K562 (cell line): ENCODE measurements at regions of chr7 and their contacts with region 1.

Region 1: GRCh38 chr7:83410989-83411591 is 237.8 kb downstream of the SEMA3E start:
- DNase-seq: peak; percentile 11 to 36 (median 16)
- ATAC-seq: no peak
- H3K4me3 ChIP-seq: no peak overlapping the region
- H3K27ac ChIP-seq: no peak overlapping the region
- H3K4me1 ChIP-seq: no peaks in the 10 kb centered on the region
- H3K27me3 ChIP-seq: no peaks in the 10 kb centered on the region
- CTCF ChIP-seq: peak in 2 of 3 experiments; percentile 38 to 50; a peak in 4 of 6 replicates
- EP300 ChIP-seq: no peak
- POLR2A ChIP-seq: no peak
- RAD21 ChIP-seq: peak; percentile 29 to 55; a peak in 3 of 4 replicates

Region 2: DNA sequence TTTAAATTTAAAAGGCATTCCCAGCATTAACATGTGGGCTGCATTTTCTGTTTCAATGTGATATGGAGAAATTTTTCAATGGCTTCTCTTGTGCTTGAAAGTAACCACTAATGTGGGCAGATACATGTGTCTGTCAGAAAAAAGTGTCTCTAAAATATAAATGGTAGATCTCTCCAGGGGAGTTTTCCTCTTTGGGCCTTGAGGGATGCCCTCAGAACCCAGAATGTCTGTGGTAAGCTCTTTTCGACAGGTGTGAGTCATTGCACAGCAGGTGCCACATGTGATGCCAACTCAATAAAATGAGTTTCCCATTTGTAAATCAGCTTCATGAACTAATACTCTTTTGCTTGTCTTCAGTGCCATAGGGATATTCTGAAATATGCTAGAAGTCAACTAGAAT is 16.8 kb after region 1 on chr7:
- CTCF ChIA-PET with region 1: no interaction called
- POLR2A ChIA-PET with region 1: no interaction called
- in situ Hi-C with region 1: no loop called
- intact Hi-C with region 1: no loop called
- DNase-seq: no peak
- ATAC-seq: no peak
- H3K4me3 ChIP-seq: no peak overlapping the region
- H3K27ac ChIP-seq: no peak overlapping the region
- H3K4me1 ChIP-seq: no peaks in the 10 kb centered on the region
- H3K27me3 ChIP-seq: no peaks in the 10 kb centered on the region
- CTCF ChIP-seq: no peak
- EP300 ChIP-seq: no peak
- POLR2A ChIP-seq: no peak
- RAD21 ChIP-seq: no peak

Region 3: GRCh38 chr7:83439026-83439425 is 27.9 kb after region 1 on chr7:
- CTCF ChIA-PET with region 1: no interaction called
- POLR2A ChIA-PET with region 1: no interaction called
- in situ Hi-C with region 1: no loop called
- intact Hi-C with region 1: no loop called
- DNase-seq: no peak
- ATAC-seq: no peak
- H3K4me3 ChIP-seq: no peak overlapping the region
- H3K27ac ChIP-seq: no peak overlapping the region
- H3K4me1 ChIP-seq: no peaks in the 10 kb centered on the region
- H3K27me3 ChIP-seq: no peaks in the 10 kb centered on the region
- CTCF ChIP-seq: no peak
- EP300 ChIP-seq: no peak
- POLR2A ChIP-seq: no peak
- RAD21 ChIP-seq: no peak

Region 4: DNA sequence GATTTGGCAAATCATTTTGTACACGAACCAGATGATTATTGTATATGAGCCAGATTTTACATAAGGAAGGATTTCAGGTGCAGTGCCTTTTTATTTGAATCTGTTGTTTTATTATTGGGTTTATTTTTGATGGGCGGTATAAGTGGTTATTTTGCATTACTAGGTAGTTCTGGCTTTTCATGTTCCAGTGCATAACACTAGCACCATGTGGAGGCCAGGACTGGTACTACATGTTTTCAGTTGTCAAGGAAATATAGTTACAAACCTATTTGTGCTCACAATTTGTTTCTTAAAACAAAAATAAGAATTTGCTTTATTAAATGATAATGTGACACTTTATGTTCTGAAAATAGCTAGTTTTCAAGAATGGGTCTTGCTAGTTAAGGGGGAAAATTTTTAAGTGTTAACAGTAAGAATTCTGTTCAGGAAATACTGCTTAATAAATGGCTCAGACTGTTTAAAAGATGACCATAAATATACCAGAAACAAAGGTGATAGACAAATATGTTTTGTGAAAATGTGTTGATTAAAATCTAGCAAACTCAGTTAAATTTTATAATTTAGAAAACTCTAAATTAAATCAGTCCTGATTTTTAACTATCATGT is 245.0 kb after region 1 on chr7:
- CTCF ChIA-PET with region 1: interaction called, 3 read pairs
- POLR2A ChIA-PET with region 1: no interaction called
- in situ Hi-C with region 1: no loop called
- intact Hi-C with region 1: loop called (anchors 5 kb)
- DNase-seq: peak in 2 of 4 experiments; percentile 10 to 14
- ATAC-seq: no peak
- H3K4me3 ChIP-seq: no peak overlapping the region
- H3K27ac ChIP-seq: no peak overlapping the region
- H3K4me1 ChIP-seq: no peaks in the 10 kb centered on the region
- H3K27me3 ChIP-seq: no peaks in the 10 kb centered on the region
- CTCF ChIP-seq: peak in 2 of 3 experiments; percentile 16 to 39; a peak in 2 of 6 replicates
- EP300 ChIP-seq: no peak
- POLR2A ChIP-seq: no peak
- RAD21 ChIP-seq: peak in 1 of 2 experiments; percentile 51; a peak in 3 of 4 replicates

Region 5: GRCh38 chr7:84042110-84042539 is 631.0 kb after region 1 on chr7:
- CTCF ChIA-PET with region 1: no interaction called
- POLR2A ChIA-PET with region 1: no interaction called
- in situ Hi-C with region 1: no loop called
- intact Hi-C with region 1: no loop called
- DNase-seq: no peak
- ATAC-seq: no peak
- H3K4me3 ChIP-seq: no peak overlapping the region
- H3K27ac ChIP-seq: no peak overlapping the region
- H3K4me1 ChIP-seq: no peaks in the 10 kb centered on the region
- H3K27me3 ChIP-seq: no peaks in the 10 kb centered on the region
- CTCF ChIP-seq: no peak
- EP300 ChIP-seq: no peak
- POLR2A ChIP-seq: no peak
- RAD21 ChIP-seq: no peak